ENCODE measurements at regions of chr7 and their contacts with region 1.

Region 1: DNA sequence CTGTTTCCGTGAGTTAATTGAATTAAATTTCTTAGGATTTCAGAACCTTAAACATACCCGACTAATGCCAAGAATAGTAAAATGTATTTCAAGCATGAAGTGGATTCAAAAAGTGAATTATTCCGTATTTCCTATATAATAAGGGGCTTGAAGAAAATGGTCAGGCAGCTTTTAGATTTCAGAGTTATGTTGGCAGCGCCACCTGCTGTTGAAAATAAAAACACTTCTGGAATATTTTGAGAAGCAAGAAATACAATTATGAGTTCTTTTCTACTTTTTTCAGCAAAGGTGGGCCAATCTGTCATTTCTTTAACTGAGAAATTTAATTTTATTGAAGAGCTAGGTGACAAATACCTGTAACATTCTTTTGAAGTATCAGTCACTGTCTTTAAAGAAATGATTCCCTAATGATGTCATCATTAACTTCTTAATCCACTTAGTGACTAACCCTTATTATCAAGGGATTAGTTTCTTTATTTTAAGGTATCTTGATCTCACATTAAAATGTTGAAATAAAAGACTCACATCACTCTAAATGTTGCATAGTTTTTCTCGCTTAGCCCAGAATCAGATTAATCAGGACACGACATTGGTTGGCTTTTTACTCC is 36.6 kb upstream of the AGR3 start:
- DNase-seq: no peak
- ATAC-seq: no peak

Region 2: GRCh38 chr7:16695621-16696237 is 222.7 kb before region 1 on chr7:
- intact Hi-C with region 1: loop called (anchors 5 to 10 kb)
- DNase-seq: no peak
- ATAC-seq: peak; percentile 78 to 84

Region 3: DNA sequence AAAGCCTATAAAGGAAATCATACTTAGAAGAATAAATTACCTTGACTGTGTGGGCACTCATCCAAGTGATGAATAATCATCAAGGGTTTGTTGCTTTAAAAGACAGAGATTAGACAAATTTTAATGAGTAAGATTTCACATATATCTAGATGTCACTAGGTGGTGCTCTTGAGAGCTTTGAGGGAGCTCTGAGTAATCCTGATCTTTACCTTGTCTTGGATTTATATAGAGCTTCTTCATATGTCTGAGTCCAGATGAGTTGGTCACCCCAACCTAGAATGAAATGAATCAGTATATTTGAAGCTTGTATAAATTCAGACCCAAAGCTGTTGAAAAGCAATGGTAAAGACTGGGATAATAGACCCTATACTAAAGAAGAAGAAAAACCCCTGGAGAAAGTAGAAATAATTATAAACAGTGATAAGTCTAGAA is 117.3 kb before region 1 on chr7:
- intact Hi-C with region 1: loop called (anchors 5 kb)
- DNase-seq: no peak
- ATAC-seq: peak in 1 of 2 donors; percentile 67

Region 4: DNA sequence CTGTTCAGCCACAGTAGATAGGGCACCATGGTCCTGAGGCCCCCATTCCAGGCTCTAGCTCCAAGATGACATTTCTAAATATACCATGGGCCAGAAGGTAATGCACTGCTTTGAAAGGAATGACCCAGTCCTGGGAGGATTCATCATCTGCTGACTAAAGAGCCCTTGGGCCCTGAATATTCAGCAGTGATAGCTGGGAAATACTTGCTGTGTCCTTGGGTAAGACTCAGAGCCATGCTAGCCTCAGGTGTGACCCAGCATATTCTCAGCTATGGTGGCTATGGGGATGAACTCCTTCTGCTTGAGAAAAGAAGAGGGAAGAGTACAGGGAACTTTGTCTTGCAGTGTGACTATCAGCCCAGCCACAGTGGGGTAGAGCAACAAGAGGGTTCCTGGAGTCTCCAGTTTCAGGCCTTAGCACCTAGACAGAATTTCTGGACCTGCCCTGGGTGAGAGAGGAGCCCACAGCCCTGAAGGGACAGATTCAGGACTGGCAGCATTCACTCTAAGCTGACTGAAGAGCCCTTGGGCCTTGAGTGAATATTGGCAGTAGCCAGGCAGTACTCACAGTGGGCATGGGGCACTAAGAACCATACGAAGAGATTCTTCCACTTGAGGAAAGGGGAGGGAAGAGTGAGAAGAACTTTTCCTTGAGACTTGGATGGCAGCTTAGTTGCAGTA is 92.2 kb before region 1 on chr7:
- intact Hi-C with region 1: no loop called
- DNase-seq: no peak
- ATAC-seq: no peak

Region 5: DNA sequence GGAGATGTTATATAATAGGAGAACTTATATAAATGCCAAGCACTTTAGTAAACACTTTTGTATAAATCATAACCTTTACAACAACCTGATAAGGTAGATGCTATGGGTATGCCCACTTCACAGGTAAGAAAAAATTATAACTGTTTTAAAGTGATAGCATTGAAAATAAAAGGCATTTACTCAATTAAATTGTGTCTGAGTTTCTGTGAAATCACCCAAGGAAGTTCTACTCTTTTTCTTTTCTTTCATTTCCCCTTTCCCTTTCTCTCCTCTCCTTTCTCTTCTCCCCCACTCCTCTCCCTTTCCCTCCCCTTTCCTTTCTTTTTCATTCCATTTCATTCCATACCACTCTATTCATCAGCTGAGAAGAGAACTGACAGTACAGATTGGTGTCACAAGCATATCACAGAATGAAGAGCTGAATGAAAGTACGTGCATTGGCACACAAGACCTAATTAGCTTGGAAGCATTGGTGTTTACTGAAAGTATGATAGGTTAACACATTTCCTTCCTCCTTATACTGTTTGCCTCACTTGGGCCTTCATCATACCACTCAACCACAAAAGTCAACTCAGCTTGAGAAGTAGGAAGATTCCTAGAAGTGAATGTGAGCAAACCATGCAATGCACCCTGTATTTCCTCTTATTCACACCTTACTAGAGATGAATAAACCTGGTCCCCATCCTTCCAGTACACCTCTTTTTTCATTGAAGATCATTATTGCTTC is 81.3 kb after region 1 on chr7:
- intact Hi-C with region 1: no loop called
- DNase-seq: no peak
- ATAC-seq: no peak

Measured in left cardiac atrium (tissue), 4 donors.